Prostate gland (tissue), 2 donors: ENCODE measurements at regions of chr21 and their contacts with region 1.

Region 1: GRCh38 chr21:45140346-45140940 is 66.1 kb downstream of the ADARB1 start:
- DNase-seq: peak; percentile 63
- H3K4me3 ChIP-seq: no peak overlapping the region
- H3K27ac ChIP-seq: no peak overlapping the region
- H3K4me1 ChIP-seq: no peaks in the 10 kb centered on the region
- H3K27me3 ChIP-seq: no peaks in the 10 kb centered on the region
- CTCF ChIP-seq: peak; percentile 36 to 87 (median 72)
- POLR2A ChIP-seq: no peak

Region 2: DNA sequence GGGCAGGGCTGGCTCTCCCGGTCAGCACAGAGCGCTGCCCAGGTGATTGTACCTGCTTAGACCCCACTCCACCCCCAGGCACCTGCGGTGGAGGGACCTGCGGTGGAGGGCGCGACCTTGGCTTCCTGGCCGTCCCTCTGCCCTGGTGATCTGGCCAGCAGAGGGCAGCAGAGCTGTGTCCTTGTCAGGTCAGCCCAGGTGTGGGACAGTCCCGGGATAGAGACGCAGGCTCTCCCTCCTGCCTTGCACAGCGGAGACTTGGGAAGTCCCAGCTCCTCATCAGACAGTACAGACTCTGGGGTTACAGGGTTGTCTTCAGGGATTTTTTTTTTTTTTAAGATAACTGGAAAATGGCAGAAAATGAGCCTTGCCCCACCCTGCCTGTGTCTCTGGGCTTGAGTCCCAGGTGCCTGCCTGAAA is 190.7 kb before region 1 on chr21:
- intact Hi-C with region 1: loop called (anchors 2 kb)
- DNase-seq: peak; percentile 84
- H3K4me3 ChIP-seq: no peak overlapping the region
- H3K27ac ChIP-seq: no peak overlapping the region
- H3K4me1 ChIP-seq: no peaks in the 10 kb centered on the region
- H3K27me3 ChIP-seq: no peaks in the 10 kb centered on the region
- CTCF ChIP-seq: peak; percentile 94 to 95 (median 95)
- POLR2A ChIP-seq: no peak

Region 3: DNA sequence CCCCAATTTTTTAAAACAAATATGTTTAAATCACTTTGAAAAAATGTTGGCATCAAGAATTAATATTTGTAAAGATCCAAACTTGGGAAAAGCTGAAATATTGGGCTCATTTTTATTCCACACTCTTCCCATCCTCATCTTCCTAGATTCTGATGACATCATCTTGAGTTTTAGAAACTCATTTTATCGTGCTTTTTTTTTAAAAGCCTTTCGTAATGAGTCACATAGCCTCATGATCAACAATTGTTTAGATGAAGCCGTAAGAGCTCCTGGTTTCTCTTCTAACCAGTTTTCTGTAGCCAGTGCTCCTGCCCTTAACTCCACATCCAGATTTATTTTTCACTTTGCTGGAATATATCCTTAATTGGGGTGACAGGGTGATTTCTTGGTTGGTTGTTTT is 68.6 kb after region 1 on chr21:
- intact Hi-C with region 1: loop called (anchors 10 kb)
- DNase-seq: no peak
- H3K4me3 ChIP-seq: no peak overlapping the region
- H3K27ac ChIP-seq: no peak overlapping the region
- H3K4me1 ChIP-seq: no peaks in the 10 kb centered on the region
- H3K27me3 ChIP-seq: no peaks in the 10 kb centered on the region
- CTCF ChIP-seq: no peak
- POLR2A ChIP-seq: no peak

Region 4: DNA sequence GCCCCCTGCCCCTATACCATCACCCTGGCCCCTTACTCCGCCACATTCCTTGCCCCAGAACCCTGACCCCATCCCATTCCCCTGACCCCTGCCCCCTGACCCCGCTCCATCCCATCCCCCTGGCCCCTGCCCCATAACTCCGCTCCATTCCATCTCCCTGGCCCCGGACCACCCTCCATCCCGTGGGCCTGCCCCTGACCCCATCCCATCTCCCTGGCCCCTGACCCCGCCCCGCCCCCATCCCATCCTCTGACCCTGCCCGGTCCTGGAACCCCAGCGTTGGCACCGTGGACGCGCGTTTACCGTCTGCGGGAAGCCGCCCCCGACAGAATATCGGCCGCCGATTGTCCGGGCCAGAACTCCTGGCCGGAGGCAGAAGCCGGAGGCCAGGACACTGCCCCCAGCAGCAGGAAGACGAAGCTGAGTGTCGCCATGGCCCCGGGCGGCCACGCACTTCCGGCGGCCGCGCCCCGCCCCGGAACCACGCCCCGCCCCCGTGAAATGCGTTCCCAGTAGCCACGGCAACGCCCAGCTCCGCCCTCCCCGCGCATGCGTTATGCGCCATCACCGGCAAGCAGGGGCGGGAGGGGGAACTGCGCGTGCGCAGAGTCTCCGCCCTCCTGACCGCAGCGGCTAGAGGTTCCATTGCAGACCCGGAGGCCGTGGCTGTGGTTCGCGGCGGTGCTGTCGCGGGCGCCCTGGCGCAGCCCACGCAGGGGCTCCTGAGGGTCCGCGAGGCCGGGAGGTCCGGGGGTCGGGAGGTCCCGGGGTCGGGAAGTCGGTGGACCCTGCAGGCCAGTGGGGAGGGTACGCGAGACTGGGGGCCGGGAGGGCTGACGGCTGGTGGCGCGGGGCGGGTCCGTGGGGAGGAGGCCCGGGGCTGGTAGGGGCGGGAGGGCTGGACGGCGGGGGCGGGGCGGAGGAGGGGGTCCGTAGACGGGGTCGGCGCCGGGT is 147.3 kb after region 1 on chr21 and contains the start of gene POFUT2:
- intact Hi-C with region 1: loop called (anchors 10 kb)
- DNase-seq: peak; percentile 94
- H3K4me3 ChIP-seq: peak within 1 kb of the TSS; percentile 71 to 90
- H3K27ac ChIP-seq: peak within 1 kb of the TSS; percentile 67 to 76
- H3K4me1 ChIP-seq: peaks cover 11% of the 10 kb centered on the region
- H3K27me3 ChIP-seq: no peaks in the 10 kb centered on the region
- CTCF ChIP-seq: peak in 2 of 4 experiments; percentile 41 to 43
- POLR2A ChIP-seq: peak; percentile 86
- total RNA-seq, gene POFUT2: 20.2 to 52.4 TPM

Region 5: GRCh38 chr21:45432575-45433255 is 292.3 kb after region 1 on chr21:
- intact Hi-C with region 1: loop called (anchors 5 kb)
- DNase-seq: no peak
- H3K4me3 ChIP-seq: no peak overlapping the region
- H3K27ac ChIP-seq: peak overlapping the region; percentile 61 to 74
- H3K4me1 ChIP-seq: no peaks in the 10 kb centered on the region
- H3K27me3 ChIP-seq: peaks cover 5% of the 10 kb centered on the region
- CTCF ChIP-seq: no peak
- POLR2A ChIP-seq: no peak